ENCODE measurements at regions of chr14 and their contacts with region 1.

Region 1: DNA sequence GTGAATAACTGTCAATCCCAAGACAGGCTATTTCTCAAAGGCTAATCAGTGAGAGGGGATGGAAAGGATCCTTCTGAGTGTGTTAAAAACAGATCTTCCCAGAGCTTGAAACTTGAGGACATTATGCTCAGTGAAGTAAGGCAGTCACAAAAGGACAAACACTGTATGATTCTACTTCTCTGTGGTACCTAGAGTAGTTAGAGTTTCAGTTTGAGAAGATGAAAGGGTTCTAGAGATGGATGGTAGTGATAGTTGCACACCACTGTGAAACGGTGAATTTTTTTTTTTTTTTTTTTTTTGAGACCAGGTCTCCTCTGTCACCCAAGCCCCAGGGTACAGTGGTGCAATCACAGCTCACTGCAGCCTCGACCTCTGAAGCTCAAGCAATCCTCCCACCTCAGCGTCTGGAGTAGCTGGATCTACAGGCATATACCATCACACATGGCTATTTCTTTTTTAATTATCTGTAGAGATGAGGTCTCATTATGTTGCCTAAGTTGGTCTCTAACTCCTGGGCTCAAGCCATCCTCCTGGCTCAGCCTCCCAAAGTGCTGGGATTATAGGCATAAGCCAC is 133.9 kb downstream of the SAMD4A start:
- DNase-seq: no peak
- H3K4me3 Mint-ChIP-seq: no peak overlapping the region
- H3K27ac Mint-ChIP-seq: no peak overlapping the region
- H3K4me1 Mint-ChIP-seq: peaks cover 14% of the 10 kb centered on the region
- H3K27me3 Mint-ChIP-seq: peaks cover 46% of the 10 kb centered on the region

Region 2: DNA sequence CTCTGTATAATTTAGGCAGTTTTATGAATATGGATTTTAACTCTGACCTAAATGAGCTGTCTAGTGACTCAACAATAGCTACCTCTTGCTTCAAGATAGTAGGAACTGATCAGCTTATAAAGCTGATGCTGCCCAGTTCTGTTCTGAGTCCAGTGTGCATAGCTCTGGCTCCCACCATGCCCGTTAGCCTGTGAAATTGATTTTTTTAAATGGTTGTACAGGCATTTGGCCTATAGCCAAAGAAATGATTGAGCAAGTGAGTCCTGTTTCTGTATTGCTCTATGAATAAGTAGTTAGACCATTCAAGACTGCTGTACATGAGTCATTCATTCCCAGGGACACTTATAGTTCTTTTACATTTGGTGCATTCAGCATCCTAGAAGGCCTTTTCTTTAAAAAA is 97.4 kb before region 1 on chr14:
- intact Hi-C with region 1: no loop called
- DNase-seq: no peak
- H3K4me3 Mint-ChIP-seq: no peak overlapping the region
- H3K27ac Mint-ChIP-seq: no peak overlapping the region
- H3K4me1 Mint-ChIP-seq: no peaks in the 10 kb centered on the region
- H3K27me3 Mint-ChIP-seq: peaks cover 18% of the 10 kb centered on the region

Region 3: DNA sequence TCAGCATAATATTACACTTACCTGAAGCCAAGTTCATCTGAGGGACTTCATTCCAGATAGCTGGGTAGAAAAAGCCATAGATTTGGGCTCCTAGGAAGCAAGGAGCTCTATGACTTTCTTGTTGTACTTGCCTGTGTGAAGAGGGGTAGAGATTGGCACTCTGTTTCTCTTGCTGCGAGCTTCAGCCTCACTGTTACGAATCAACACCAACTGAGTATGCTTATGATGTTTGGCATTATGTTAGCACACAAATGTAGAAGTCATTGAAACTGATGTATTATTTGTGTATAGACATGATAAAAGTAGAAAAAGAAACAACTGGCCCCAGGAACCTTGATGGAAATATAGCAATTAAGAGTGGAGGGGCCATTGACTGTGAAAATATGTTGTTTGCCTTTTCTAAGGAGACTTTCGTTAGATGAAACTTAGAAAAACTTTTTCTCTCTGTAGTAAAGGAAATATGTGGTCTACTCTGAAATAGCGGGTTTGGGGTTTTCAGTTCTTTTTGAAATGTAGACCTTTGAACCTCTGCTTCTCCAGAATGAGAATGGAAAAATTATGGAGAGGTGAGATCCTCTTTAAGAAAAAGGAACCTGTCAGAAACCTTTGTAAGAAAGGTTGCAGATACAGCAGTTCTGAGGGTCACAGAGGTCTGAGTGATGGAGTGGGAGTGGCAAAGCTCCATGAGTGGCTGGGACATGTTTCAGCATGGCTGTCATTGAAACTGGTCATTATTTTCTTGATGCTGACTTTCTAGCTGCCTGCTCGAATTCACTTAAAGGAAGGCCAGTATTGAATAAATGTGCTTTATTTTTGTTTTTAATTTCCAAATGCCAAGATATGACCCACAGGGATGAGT is 41.9 kb after region 1 on chr14:
- intact Hi-C with region 1: loop called (anchors 5 kb)
- DNase-seq: no peak
- H3K4me3 Mint-ChIP-seq: no peak overlapping the region
- H3K27ac Mint-ChIP-seq: peak overlapping the region; percentile 59
- H3K4me1 Mint-ChIP-seq: peaks cover 54% of the 10 kb centered on the region
- H3K27me3 Mint-ChIP-seq: peaks cover 6% of the 10 kb centered on the region

Measured in activated T-helper 2 cell treated with anti-CD3 and anti-CD28 coated beads, Interferon-gamma antibody, Interleukin-2, Interleukin-4, amounts not matched to agents 10 μg/mL and 5 μg/mL and 100 μg/mL, durations not matched to agents 14 hours and 24 hours and 36 hours (primary cell).